ENCODE measurements at regions of chr20 and their contacts with region 1.

Region 1: DNA sequence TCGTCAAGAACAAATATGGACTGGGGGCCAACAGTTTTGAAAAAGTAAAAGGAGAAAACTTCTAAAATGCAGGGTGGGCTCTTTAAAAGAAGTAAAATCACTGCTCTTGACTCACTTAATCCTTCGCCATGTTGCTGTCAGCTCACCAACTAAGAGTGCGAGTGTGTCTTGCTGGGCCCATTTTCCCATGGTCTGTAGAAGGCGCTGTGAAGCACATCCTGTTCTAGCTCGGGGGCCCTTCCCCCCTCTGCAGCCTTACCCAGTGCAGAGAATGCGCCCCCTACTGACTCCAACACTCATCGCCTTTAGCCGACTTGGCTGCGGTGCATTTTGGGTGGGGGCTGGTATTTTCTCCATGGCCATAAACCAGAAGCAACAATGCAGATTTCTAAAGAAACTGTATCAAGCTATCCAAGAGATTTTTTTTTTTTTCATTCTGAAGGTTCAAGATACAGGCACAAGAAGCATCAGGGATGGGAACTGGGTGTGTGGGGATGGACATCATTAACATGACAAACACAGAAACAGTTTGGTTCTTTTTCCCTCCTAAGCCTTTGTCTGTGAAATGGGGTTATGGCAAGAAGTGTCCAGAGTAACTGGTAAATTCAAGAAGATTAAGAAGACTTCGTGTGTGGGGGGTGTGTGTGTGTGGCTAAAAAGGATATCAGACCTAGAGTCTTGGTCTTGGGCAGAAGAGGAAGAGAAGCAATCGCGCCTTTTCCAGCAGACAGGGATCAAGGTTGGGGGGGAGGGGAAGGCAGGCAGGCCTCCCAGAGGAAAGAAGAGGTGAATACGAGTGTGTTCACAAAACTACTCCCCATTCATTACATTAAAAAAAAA is 1.7 kb downstream of the ADNP start:
- DNase-seq: peak; percentile 99
- ATAC-seq: peak; percentile 79
- H3K4me3 Mint-ChIP-seq: peak overlapping the region; percentile 82
- H3K27ac Mint-ChIP-seq: peak overlapping the region; percentile 92
- H3K4me1 Mint-ChIP-seq: peaks cover 50% of the 10 kb centered on the region
- H3K27me3 Mint-ChIP-seq: no peaks in the 10 kb centered on the region
- CTCF ChIP-seq: peak; percentile 81

Region 2: GRCh38 chr20:50569864-50570836 is 359.4 kb before region 1 on chr20:
- CTCF ChIA-PET with region 1: no interaction called
- POLR2A ChIA-PET with region 1: no interaction called
- intact Hi-C with region 1: no loop called
- DNase-seq: peak; percentile 71
- ATAC-seq: peak; percentile 93
- H3K4me3 Mint-ChIP-seq: no peak overlapping the region
- H3K27ac Mint-ChIP-seq: peak overlapping the region; percentile 78
- H3K4me1 Mint-ChIP-seq: peaks cover 58% of the 10 kb centered on the region
- H3K27me3 Mint-ChIP-seq: no peaks in the 10 kb centered on the region
- CTCF ChIP-seq: peak; percentile 46

Region 3: DNA sequence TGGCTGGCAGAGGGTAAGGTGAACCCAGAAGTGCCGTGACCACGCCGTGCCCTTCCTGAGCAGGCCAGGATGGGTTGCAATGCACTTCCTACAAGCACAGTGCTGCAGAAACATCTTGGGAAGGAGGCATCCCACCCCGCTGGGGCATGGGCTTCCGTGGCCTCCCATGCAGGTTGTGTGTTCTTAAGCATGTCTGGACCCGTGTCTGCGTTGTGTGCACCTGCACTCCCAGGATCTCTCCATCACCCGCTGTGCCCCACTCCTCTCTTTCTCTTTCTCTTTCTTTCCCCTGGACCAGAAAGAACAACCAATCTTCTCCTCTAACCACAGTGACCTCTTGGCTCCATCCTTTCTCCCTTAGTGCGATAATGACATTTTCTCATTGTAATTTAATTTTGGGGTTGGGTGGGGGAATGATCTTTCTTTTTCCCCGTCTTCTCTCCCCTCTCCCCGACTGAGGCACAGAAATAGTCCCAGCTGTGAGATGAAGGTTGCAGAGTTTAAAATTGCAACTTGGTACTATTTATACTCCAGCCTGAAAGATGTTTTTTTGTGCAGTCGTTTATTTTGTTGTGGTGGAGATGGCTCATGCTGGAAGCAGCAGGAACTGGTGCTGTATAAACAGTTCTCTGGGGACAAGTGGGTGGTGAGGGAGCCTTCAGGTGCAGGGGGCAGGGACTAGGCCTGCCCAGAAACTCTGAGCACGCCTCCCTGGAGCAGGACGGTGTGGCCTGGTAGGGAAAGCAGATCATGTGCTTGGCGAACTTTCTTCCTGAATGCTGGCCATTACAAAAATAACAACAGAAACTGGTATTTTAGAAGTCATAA is 114.1 kb before region 1 on chr20:
- CTCF ChIA-PET with region 1: interaction called, 34 read pairs
- POLR2A ChIA-PET with region 1: interaction called, 23 read pairs
- intact Hi-C with region 1: loop called (anchors 5 kb)
- DNase-seq: peak; percentile 45
- ATAC-seq: peak; percentile 38
- H3K4me3 Mint-ChIP-seq: peak overlapping the region; percentile 69
- H3K27ac Mint-ChIP-seq: peak overlapping the region; percentile 90
- H3K4me1 Mint-ChIP-seq: peaks cover 64% of the 10 kb centered on the region
- H3K27me3 Mint-ChIP-seq: no peaks in the 10 kb centered on the region
- CTCF ChIP-seq: no peak

Region 4: GRCh38 chr20:50844430-50845100 is 85.0 kb before region 1 on chr20:
- CTCF ChIA-PET with region 1: interaction called, 16 read pairs
- POLR2A ChIA-PET with region 1: interaction called, 6 read pairs
- intact Hi-C with region 1: no loop called
- DNase-seq: peak; percentile 92
- ATAC-seq: peak; percentile 99
- H3K4me3 Mint-ChIP-seq: peak overlapping the region; percentile 10
- H3K27ac Mint-ChIP-seq: peak overlapping the region; percentile 87
- H3K4me1 Mint-ChIP-seq: peaks cover 18% of the 10 kb centered on the region
- H3K27me3 Mint-ChIP-seq: no peaks in the 10 kb centered on the region
- CTCF ChIP-seq: no peak

Region 5: DNA sequence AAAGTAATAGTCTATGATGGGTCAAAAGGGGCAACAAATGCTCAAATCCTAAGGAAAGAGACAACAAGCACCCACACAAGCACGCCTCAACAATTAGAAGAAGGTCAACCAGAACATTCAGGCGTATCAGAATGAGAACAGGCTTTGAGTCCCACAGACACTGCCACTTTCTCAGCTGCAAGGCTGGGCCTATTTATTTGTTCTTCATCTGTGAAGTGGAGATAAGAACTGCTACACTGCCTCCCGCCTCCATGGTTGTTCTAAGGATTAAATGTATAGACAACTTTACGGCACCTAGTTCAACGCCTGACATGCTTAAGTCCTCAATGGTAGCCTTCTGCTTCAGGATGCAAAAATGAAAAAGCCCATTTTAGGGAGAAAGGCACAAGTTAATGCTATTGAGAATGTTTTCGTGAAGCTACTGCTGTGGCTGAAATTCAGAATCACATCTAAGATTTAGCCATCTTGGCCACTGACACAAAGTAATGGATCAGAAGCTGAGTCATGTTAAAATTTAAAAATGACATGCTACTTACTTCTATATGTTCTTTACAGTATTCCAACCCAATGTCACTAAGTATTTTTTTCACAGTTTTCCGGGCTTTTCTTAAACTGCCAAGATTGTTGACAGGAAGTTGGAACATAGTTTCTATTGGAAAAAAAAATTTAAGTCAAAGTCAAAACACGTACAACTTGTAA is 26.0 kb before region 1 on chr20:
- CTCF ChIA-PET with region 1: interaction called, 16 read pairs
- POLR2A ChIA-PET with region 1: interaction called, 5 read pairs
- intact Hi-C with region 1: no loop called
- DNase-seq: no peak
- ATAC-seq: no peak
- H3K4me3 Mint-ChIP-seq: no peak overlapping the region
- H3K27ac Mint-ChIP-seq: peak overlapping the region; percentile 52
- H3K4me1 Mint-ChIP-seq: peaks cover 40% of the 10 kb centered on the region
- H3K27me3 Mint-ChIP-seq: no peaks in the 10 kb centered on the region
- CTCF ChIP-seq: no peak

Region 6: GRCh38 chr20:50943069-50943468 is 13.6 kb after region 1 on chr20:
- CTCF ChIA-PET with region 1: interaction called, 10 read pairs
- POLR2A ChIA-PET with region 1: interaction called, 5 read pairs
- intact Hi-C with region 1: no loop called
- DNase-seq: no peak
- ATAC-seq: no peak
- H3K4me3 Mint-ChIP-seq: no peak overlapping the region
- H3K27ac Mint-ChIP-seq: no peak overlapping the region
- H3K4me1 Mint-ChIP-seq: no peaks in the 10 kb centered on the region
- H3K27me3 Mint-ChIP-seq: no peaks in the 10 kb centered on the region
- CTCF ChIP-seq: no peak

Region 7: GRCh38 chr20:50958615-50959542 is 29.4 kb after region 1 on chr20 and contains the start of gene MOCS3:
- CTCF ChIA-PET with region 1: interaction called, 22 read pairs
- POLR2A ChIA-PET with region 1: interaction called, 85 read pairs
- intact Hi-C with region 1: no loop called
- DNase-seq: peak; percentile 85
- ATAC-seq: peak; percentile 84
- H3K4me3 Mint-ChIP-seq: peak within 1 kb of the TSS; percentile 96
- H3K27ac Mint-ChIP-seq: peak within 1 kb of the TSS; percentile 100
- H3K4me1 Mint-ChIP-seq: peaks cover 48% of the 10 kb centered on the region
- H3K27me3 Mint-ChIP-seq: no peaks in the 10 kb centered on the region
- CTCF ChIP-seq: no peak
- total RNA-seq, gene MOCS3: 4.6 TPM

Region 8: DNA sequence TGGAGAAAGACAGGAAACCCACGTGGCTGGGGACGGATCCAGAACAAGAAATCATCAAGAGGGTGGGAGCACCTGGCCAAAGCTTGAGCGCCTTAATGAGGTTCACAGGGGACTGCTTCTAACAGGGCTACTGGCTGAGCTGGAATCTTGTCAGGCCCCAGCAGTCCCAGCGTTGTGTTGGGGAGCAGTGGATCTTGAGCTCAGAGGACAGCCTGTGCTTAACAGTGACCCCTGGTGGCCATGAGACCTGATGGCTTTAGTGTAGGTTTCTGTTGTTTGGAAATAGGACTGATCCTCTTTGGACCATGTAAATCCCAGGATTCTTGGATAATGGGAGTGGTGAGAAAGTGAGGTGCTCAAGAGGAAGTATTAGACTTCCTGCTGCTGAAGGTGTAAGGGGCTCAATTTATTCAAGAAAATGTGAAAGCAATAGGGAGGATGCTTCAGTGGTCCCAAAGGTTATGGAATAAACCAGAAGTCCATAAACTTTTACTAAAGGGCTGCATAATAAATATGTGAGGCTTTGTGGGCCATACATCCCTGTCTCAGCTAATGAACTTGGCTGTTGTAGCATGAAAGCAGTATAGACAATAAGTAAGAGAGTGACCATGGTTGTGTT is 396.8 kb after region 1 on chr20:
- CTCF ChIA-PET with region 1: no interaction called
- POLR2A ChIA-PET with region 1: no interaction called
- intact Hi-C with region 1: no loop called
- DNase-seq: no peak
- ATAC-seq: no peak
- H3K4me3 Mint-ChIP-seq: no peak overlapping the region
- H3K27ac Mint-ChIP-seq: no peak overlapping the region
- H3K4me1 Mint-ChIP-seq: no peaks in the 10 kb centered on the region
- H3K27me3 Mint-ChIP-seq: no peaks in the 10 kb centered on the region
- CTCF ChIP-seq: peak; percentile 13

Measured in activated CD8-positive, alpha-beta T cell treated with anti-CD3 and anti-CD28 coated beads for 36 hours (primary cell).